ENCODE measurements at regions of chr13 and their contacts with region 1.

Region 1: DNA sequence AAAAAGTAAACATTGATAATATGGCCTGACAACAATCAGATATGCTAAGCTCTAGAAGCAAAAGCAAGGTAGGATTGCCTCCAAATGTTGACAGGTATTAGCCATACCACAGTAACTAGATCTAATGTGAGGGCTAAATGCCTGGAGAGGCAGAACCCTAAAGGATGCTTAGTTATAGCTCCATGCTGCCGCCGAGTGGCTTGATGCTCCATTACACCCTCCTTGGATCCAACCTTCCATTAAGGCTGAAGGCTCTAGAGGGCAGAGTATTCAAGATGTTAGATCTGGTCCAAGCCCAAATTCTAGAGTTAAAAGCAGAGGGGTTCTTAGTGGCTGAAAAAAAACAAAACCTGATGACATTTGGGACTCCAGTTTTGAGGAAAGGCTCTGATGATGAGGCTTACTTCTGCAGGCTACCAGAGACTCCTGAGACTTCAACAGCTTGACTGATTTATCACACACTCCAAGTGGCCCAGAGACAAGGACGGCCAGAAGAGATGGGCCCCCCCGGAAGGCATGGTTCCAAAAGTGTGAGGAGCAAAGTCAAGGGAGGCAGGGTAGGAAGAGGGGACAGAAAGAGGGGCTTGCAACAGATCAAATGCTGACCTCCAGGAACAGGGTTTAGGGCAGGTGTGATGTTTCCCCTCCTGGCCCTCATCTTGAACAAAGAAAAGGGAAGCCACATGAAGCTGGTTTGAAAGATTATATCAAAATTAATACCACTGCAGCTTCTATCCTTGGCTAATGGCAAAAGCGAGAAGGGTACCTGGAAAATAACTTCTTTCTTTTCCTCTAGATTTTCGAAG is 21.9 kb upstream of the CPB2 start:
- DNase-seq: peak; percentile 66 to 81 (median 67)
- ATAC-seq: peak; percentile 95
- H3K4me3 ChIP-seq: no peak overlapping the region
- H3K27ac ChIP-seq: no peak overlapping the region
- H3K4me1 ChIP-seq: peaks cover 0 to 20% of the 10 kb centered on the region in 2 experiments; a peak in 3 of 5 replicates
- H3K27me3 ChIP-seq: no peaks in the 10 kb centered on the region
- CTCF ChIP-seq: peak; percentile 86 to 98 (median 98)
- EP300 ChIP-seq: no peak
- POLR2A ChIP-seq: no peak
- RAD21 ChIP-seq: peak; percentile 85 to 90

Region 2: GRCh38 chr13:45807520-45808099 is 319.1 kb before region 1 on chr13:
- CTCF ChIA-PET with region 1: interaction called, 7 read pairs
- POLR2A ChIA-PET with region 1: no interaction called
- in situ Hi-C with region 1: no loop called
- intact Hi-C with region 1: loop called (anchors 2 kb)
- DNase-seq: peak; percentile 15 to 44 (median 28)
- ATAC-seq: peak; percentile 80
- H3K4me3 ChIP-seq: no peak overlapping the region
- H3K27ac ChIP-seq: no peak overlapping the region
- H3K4me1 ChIP-seq: no peaks in the 10 kb centered on the region
- H3K27me3 ChIP-seq: peaks cover 0 to 8% of the 10 kb centered on the region in 2 experiments; a peak in 2 of 5 replicates
- CTCF ChIP-seq: peak; percentile 48 to 52 (median 48); a peak in 5 of 6 replicates
- EP300 ChIP-seq: no peak
- POLR2A ChIP-seq: no peak
- RAD21 ChIP-seq: peak; percentile 59 to 79

Region 3: DNA sequence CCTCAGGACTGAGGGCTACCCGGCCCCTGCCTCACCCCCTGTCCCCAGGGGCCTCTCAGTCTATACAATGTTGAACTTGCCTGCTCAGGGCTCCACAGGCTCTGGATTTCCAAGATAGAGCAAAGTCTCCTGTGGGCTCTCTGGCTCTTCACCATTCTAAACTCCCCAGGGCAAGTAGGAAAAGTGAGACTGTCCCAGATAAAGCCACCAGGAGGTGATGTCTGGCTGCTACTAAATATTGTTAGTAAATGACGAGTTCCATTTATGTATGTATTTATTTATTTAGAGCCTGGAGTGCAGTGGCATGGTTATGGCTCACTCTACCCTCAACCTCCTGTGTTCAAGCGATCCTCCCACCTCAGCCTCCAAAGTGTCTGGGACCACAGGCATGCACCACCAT is 201.6 kb before region 1 on chr13:
- CTCF ChIA-PET with region 1: interaction called, 3 read pairs
- POLR2A ChIA-PET with region 1: interaction called, 3 read pairs
- in situ Hi-C with region 1: no loop called
- intact Hi-C with region 1: loop called (anchors 1 kb)
- DNase-seq: peak in 3 of 4 experiments; percentile 8 to 13 (median 9)
- ATAC-seq: peak; percentile 67
- H3K4me3 ChIP-seq: no peak overlapping the region
- H3K27ac ChIP-seq: no peak overlapping the region
- H3K4me1 ChIP-seq: peaks cover 0 to 3% of the 10 kb centered on the region in 2 experiments; a peak in 1 of 5 replicates
- H3K27me3 ChIP-seq: peaks cover 5 to 29% of the 10 kb centered on the region in 2 experiments; a peak in 3 of 5 replicates
- CTCF ChIP-seq: peak; percentile 22 to 51 (median 41); a peak in 5 of 6 replicates
- EP300 ChIP-seq: no peak
- POLR2A ChIP-seq: no peak
- RAD21 ChIP-seq: peak in 1 of 2 experiments; percentile 52; a peak in 2 of 4 replicates

Region 4: GRCh38 chr13:46031581-46032263 is 95.0 kb before region 1 on chr13:
- CTCF ChIA-PET with region 1: no interaction called
- POLR2A ChIA-PET with region 1: no interaction called
- in situ Hi-C with region 1: no loop called
- intact Hi-C with region 1: no loop called
- DNase-seq: no peak
- ATAC-seq: no peak
- H3K4me3 ChIP-seq: no peak overlapping the region
- H3K27ac ChIP-seq: no peak overlapping the region
- H3K4me1 ChIP-seq: no peaks in the 10 kb centered on the region
- H3K27me3 ChIP-seq: no peaks in the 10 kb centered on the region
- CTCF ChIP-seq: no peak
- EP300 ChIP-seq: no peak
- POLR2A ChIP-seq: no peak
- RAD21 ChIP-seq: no peak

Region 5: DNA sequence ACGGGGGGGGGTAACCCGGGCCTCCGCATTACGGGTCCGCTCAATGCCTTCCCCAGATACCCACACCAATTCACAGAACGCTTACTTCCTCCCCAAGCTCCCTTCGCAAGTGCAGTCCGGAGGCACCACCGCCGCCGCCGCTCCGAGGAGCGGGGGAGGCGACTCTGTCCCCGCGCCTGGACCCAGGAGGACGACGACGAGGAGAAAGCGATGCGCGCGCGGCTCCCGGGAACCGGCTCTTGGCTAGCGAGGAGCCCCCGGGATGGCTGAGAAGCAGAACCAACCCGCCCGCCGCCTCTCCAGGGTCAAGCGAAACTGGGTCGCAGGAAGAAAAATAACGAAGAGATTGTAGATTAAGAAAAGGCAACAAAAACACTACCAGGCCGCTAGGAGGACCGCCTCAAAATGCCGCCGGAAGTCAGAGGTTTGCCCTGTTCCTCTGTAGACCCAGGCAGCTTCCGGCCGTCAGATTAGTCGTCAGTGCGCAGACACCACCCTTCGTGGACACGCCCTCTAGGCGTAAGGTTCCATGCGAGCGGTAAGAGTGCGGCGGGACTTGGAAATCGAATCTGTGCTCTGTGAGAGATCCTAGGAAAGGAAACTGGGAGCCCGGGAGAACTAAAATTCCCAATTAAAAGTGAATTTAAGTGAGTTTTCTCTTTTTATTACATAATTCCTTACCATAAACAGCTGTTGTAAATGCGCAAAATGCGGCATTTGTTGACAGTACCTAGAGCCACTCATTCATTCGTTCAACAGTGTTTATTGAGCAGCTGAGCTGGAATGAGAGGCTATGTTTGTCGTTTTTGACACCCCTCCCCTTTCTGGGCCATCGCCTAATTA is 74.2 kb before region 1 on chr13 and contains the start of gene ZC3H13:
- CTCF ChIA-PET with region 1: interaction called, 8 read pairs
- POLR2A ChIA-PET with region 1: interaction called, 3 read pairs
- in situ Hi-C with region 1: no loop called
- intact Hi-C with region 1: loop called (anchors 5 kb)
- DNase-seq: peak; percentile 80 to 94 (median 84)
- ATAC-seq: peak; percentile 92
- H3K4me3 ChIP-seq: peak within 1 kb of the TSS; percentile 68
- H3K27ac ChIP-seq: peak within 1 kb of the TSS; percentile 83
- H3K4me1 ChIP-seq: 0 out of 5 replicates have a peak, but pooled peaks cover 0 to 2% of the 10 kb centered on the region in 2 experiments
- H3K27me3 ChIP-seq: no peaks in the 10 kb centered on the region
- CTCF ChIP-seq: peak; percentile 21 to 48 (median 31); a peak in 4 of 6 replicates
- EP300 ChIP-seq: peak; percentile 16; the same call in 1 of the 2 replicates
- POLR2A ChIP-seq: peak; percentile 86
- RAD21 ChIP-seq: no peak
- polyA plus RNA-seq, gene ZC3H13: 8.3 to 9.1 TPM

Region 6: GRCh38 chr13:46071590-46072249 is 55.0 kb before region 1 on chr13:
- CTCF ChIA-PET with region 1: no interaction called
- POLR2A ChIA-PET with region 1: no interaction called
- in situ Hi-C with region 1: no loop called
- intact Hi-C with region 1: loop called (anchors 1 kb)
- DNase-seq: peak in 2 of 4 experiments; percentile 26 to 38
- ATAC-seq: peak; percentile 85
- H3K4me3 ChIP-seq: no peak overlapping the region
- H3K27ac ChIP-seq: no peak overlapping the region
- H3K4me1 ChIP-seq: no peaks in the 10 kb centered on the region; a peak in 1 of 5 replicates
- H3K27me3 ChIP-seq: no peaks in the 10 kb centered on the region
- CTCF ChIP-seq: peak; percentile 23 to 43 (median 40); a peak in 4 of 6 replicates
- EP300 ChIP-seq: no peak
- POLR2A ChIP-seq: no peak
- RAD21 ChIP-seq: peak; percentile 10 to 51; a peak in 2 of 4 replicates

Measured in K562 (cell line).